ENCODE measurements at regions of chr10 and their contacts with region 1.

Region 1: GRCh38 chr10:102713814-102714620 is at the start of gene ARL3:
- H3K4me3 Mint-ChIP-seq: peak within 1 kb of the TSS; percentile 88
- H3K27ac Mint-ChIP-seq: peak within 1 kb of the TSS; percentile 96
- H3K4me1 Mint-ChIP-seq: peaks cover 49% of the 10 kb centered on the region
- H3K27me3 Mint-ChIP-seq: no peaks in the 10 kb centered on the region

Region 2: DNA sequence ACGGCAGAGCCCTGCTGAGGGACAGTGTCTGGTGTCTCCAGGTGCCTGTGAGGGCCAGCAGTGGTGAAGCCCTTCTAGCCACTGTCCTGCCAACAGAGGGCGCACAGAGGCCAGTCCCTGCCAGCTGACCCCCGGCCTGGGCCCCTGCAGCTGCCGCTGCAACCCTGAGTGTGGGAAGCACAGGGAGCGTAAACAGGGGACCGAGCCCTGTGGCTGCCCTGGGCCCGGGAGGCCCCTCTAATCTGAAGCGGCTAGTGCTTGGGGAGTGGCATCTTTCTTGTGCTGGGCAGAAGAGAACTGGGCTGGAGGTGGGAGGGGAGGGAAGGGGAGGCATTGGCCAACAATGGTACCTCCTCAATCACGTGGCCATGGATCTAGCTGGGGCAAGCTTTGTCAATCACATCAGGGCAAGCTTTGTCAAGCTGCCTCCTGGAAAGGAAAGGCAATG is 35.2 kb before region 1 on chr10:
- intact Hi-C with region 1: loop called (anchors 2 kb)
- H3K4me3 Mint-ChIP-seq: peak overlapping the region; percentile 63
- H3K27ac Mint-ChIP-seq: peak overlapping the region; percentile 94
- H3K4me1 Mint-ChIP-seq: peaks cover 57% of the 10 kb centered on the region
- H3K27me3 Mint-ChIP-seq: no peaks in the 10 kb centered on the region